Pancreas (tissue), 10 donors: ENCODE measurements at regions of chr5 and their contacts with region 1.

Region 1: DNA sequence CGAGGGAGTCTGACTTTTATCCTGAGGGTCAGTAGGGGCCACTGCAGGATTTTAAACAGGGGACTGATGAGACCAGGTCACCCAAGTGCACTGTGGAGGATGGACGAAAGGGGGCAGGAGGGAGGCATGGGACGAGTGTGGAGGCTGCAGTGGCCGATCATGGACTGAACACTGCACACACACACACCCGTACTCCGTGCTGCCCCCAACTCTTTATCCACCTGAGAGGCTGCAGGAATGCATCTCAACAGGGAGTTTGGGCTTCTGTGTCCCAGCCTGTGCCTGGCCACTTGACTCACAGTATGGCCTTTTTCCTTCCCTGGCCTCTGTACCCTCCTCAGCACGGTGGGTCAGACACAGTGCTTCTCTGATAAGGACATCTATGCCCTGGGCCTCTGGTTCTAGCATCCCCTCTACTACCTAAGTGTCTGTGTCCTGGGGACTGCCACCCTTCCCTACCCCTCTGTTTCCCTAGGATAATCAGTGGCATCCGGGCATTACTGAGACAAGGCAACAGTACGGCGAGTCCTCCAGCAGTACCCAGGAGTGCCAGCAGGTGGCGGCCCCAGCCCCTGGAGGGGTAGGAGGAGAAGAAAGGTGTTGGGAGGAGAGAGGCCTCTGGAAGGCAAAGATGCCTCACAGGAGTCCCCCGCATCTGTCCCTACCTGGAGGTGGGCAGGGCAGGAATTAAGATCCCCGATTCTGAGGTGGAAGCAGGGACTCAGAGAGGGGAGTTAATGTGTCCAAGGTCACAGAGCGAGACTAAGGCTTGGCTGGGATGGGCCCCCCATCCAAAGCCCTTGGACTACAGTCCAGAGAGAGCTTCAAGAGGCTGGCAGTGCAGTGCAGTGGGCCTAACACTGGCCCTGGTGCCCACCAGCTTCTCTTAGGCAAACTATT is 5.1 kb upstream of the CDX1 start:
- DNase-seq: peak; percentile 62 to 98 (median 84)
- ATAC-seq: peak; percentile 88 to 92 (median 90)
- H3K4me3 ChIP-seq: no peak overlapping the region
- H3K27ac ChIP-seq: no peak overlapping the region
- H3K4me1 ChIP-seq: no peaks in the 10 kb centered on the region
- H3K27me3 ChIP-seq: no peaks in the 10 kb centered on the region
- CTCF ChIP-seq: peak; percentile 82 to 89 (median 86)

Region 2: DNA sequence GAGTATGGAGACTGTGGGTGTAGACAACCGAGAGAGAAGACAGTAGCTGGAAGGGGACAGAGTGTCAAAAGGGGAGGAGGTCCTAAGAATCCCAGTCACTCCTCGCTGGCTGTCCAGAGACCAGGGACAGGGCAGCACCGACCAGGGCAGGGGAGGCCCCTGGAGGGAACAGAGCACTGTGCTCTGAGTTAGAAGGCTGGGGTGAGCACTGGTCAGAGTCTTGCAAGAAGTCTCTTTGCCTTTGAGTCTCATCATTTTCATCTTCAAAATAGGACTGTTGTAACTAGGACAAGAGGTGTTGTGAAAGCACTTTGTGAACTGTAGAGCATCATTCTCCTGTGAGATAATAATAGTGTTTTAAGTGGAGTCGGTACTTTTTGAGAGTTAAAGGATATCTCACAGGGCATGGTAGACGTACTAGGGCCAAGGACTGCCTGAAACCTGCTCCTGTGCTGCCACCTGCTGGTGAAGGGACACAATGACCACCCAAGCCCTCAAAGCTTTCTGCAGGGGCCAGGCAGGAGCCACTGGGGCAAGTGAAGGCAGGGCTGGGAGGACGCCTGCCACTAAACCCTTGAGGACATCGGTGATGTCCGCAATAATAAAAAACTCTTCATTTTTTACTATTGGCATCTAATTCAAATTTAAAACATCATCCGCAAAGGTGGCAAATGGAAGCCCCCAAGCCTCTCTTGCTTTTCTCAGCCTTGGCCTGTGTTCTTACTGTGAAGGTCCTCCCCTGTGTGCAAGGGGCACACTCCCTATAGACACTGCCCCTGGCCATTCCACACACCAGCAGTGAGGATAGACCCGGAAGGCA is 56.6 kb after region 1 on chr5:
- intact Hi-C with region 1: loop called in 2 of 3 experiments (anchors 5 kb)
- DNase-seq: peak; percentile 65 to 89 (median 85)
- ATAC-seq: peak; percentile 91 to 97 (median 93)
- H3K4me3 ChIP-seq: no peak overlapping the region
- H3K27ac ChIP-seq: no peak overlapping the region
- H3K4me1 ChIP-seq: no peaks in the 10 kb centered on the region
- H3K27me3 ChIP-seq: no peaks in the 10 kb centered on the region
- CTCF ChIP-seq: peak; percentile 82 to 94 (median 88)

Region 3: DNA sequence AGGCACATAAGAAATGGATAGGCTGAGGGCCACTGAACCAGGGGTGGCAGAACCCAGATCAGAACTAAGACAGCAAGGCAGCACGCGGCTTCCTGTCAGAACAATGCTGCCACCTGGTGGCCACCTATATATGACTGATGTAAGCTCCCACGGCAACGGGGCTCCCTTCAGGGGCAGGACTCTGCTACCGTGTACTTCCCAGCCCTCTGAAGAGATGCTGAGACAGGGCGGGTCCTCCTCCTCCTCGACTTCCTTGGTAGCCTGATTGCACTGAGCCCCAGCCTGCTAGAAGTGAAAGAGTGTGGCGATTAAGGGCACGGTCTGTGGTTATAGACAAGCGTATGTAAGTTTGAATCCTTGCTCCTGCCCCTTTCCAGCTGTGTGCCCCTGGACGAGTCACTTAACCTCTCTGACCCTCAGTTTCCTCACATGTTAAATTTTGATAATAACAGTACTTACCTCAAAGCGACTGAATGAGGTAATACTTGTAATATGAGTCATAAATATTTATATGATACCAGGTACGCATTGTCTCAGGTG is 274.7 kb after region 1 on chr5:
- intact Hi-C with region 1: loop called in 1 of 3 experiments (anchors 10 kb)
- DNase-seq: peak; percentile 72 to 93 (median 86)
- ATAC-seq: peak; percentile 88 to 97 (median 95)
- H3K4me3 ChIP-seq: no peak overlapping the region
- H3K27ac ChIP-seq: no peak overlapping the region
- H3K4me1 ChIP-seq: no peaks in the 10 kb centered on the region
- H3K27me3 ChIP-seq: no peaks in the 10 kb centered on the region
- CTCF ChIP-seq: peak; percentile 76 to 88 (median 82)